ENCODE measurements at regions of chr15 and their contacts with region 1.

Region 1: DNA sequence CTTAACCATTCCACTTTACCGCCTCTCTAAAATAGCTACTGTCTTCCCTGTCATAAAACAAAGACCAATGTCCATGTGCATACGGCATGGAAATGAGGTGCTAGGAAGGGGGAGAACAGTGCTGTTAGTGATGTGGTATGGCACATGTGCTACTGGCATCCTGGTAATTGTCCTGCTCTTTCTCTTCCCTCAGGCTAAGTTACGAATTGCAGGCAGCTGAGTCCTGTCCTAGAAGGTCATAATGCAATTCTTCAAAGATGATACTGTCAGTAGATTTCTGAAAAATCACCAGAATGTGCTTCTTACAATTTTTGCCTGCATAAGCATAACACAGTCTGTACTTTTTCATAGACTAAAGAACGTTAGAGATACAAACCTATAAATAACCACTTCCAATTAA is 216.8 kb downstream of the RSL24D1 start:
- DNase-seq: no peak
- ATAC-seq: no peak
- H3K4me3 ChIP-seq: no peak overlapping the region
- H3K27ac ChIP-seq: no peak overlapping the region
- H3K4me1 ChIP-seq: no peaks in the 10 kb centered on the region
- H3K27me3 ChIP-seq: no peaks in the 10 kb centered on the region
- CTCF ChIP-seq: no peak

Region 2: GRCh38 chr15:55031727-55032126 is 51.8 kb after region 1 on chr15:
- intact Hi-C with region 1: loop called in 1 of 2 experiments (anchors 10 kb)
- DNase-seq: no peak
- ATAC-seq: no peak
- H3K4me3 ChIP-seq: no peak overlapping the region
- H3K27ac ChIP-seq: no peak overlapping the region
- H3K4me1 ChIP-seq: no peaks in the 10 kb centered on the region
- H3K27me3 ChIP-seq: no peaks in the 10 kb centered on the region
- CTCF ChIP-seq: no peak

Region 3: GRCh38 chr15:55267401-55268175 is 287.6 kb after region 1 on chr15:
- intact Hi-C with region 1: no loop called
- DNase-seq: peak; percentile 31 to 61
- ATAC-seq: no peak
- H3K4me3 ChIP-seq: no peak overlapping the region
- H3K27ac ChIP-seq: no peak overlapping the region
- H3K4me1 ChIP-seq: no peaks in the 10 kb centered on the region
- H3K27me3 ChIP-seq: no peaks in the 10 kb centered on the region
- CTCF ChIP-seq: no peak

Region 4: DNA sequence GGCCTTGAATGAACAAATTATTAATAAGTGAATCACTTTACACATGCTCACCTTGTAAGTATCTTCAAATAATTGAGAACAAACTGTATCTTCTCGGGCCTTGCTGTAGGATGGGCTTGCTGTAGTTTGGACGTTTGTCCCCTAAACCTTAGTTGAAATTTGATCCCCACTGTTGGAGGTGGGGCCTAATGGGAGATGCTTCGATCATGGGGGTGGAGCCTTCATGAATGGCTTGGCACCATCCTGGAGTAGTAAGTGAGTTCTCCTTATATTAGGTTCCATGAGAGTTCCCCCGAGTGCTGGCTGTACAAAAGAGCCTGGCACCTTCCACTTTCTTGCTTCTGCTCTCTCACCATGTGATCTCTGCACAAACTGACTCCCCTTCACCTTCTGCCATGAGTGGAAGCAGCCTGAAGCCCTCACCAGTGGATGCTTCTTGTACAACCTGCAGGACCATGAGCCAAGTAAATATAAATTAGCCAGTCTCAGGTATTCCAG is 368.4 kb after region 1 on chr15:
- intact Hi-C with region 1: no loop called
- DNase-seq: no peak
- ATAC-seq: no peak
- H3K4me3 ChIP-seq: no peak overlapping the region
- H3K27ac ChIP-seq: no peak overlapping the region
- H3K4me1 ChIP-seq: no peaks in the 10 kb centered on the region
- H3K27me3 ChIP-seq: no peaks in the 10 kb centered on the region
- CTCF ChIP-seq: no peak

Region 5: GRCh38 chr15:56064152-56064551 is 1084.2 kb after region 1 on chr15:
- intact Hi-C with region 1: no loop called
- DNase-seq: no peak
- ATAC-seq: no peak
- H3K4me3 ChIP-seq: no peak overlapping the region
- H3K27ac ChIP-seq: no peak overlapping the region
- H3K4me1 ChIP-seq: no peaks in the 10 kb centered on the region
- H3K27me3 ChIP-seq: no peaks in the 10 kb centered on the region
- CTCF ChIP-seq: no peak

Measured in psoas muscle (tissue), 8 donors.